HepG2 (cell line): ENCODE measurements at regions of chr6 and their contacts with region 1.

Region 1: GRCh38 chr6:115539531-115539930 is 521.2 kb downstream of the FRK start:
- DNase-seq: no peak
- ATAC-seq: no peak
- H3K4me3 ChIP-seq: no peak overlapping the region
- H3K27ac ChIP-seq: no peak overlapping the region
- H3K4me1 ChIP-seq: no peaks in the 10 kb centered on the region
- H3K27me3 ChIP-seq: no peaks in the 10 kb centered on the region
- CTCF ChIP-seq: no peak
- EP300 ChIP-seq: no peak
- POLR2A ChIP-seq: no peak
- RAD21 ChIP-seq: no peak

Region 2: GRCh38 chr6:114354482-114354881 is 1185.0 kb before region 1 on chr6:
- CTCF ChIA-PET with region 1: no interaction called
- POLR2A ChIA-PET with region 1: no interaction called
- in situ Hi-C with region 1: no loop called
- intact Hi-C with region 1: loop called (anchors 5 kb)
- DNase-seq: no peak
- ATAC-seq: no peak
- H3K4me3 ChIP-seq: no peak overlapping the region
- H3K27ac ChIP-seq: no peak overlapping the region
- H3K4me1 ChIP-seq: no peaks in the 10 kb centered on the region
- H3K27me3 ChIP-seq: no peaks in the 10 kb centered on the region
- CTCF ChIP-seq: no peak
- EP300 ChIP-seq: no peak
- POLR2A ChIP-seq: no peak
- RAD21 ChIP-seq: no peak